Left ventricle myocardium inferior (tissue), 1 donor: ENCODE measurements at regions of chr14 and their contacts with region 1.

Region 1: GRCh38 chr14:91286530-91286937 is 42.0 kb upstream of the GPR68 start:
- DNase-seq: peak; percentile 71
- H3K4me3 ChIP-seq: no peak overlapping the region
- H3K27ac ChIP-seq: no peak overlapping the region
- H3K4me1 ChIP-seq: peaks cover 18% of the 10 kb centered on the region
- H3K27me3 ChIP-seq: no peaks in the 10 kb centered on the region
- CTCF ChIP-seq: peak; percentile 90

Region 2: GRCh38 chr14:90894241-90894640 is 392.3 kb before region 1 on chr14:
- intact Hi-C with region 1: loop called (anchors 10 kb)
- DNase-seq: no peak
- H3K4me3 ChIP-seq: no peak overlapping the region
- H3K27ac ChIP-seq: peak overlapping the region; percentile 2
- H3K4me1 ChIP-seq: peaks cover 15% of the 10 kb centered on the region
- H3K27me3 ChIP-seq: no peaks in the 10 kb centered on the region
- CTCF ChIP-seq: no peak

Region 3: DNA sequence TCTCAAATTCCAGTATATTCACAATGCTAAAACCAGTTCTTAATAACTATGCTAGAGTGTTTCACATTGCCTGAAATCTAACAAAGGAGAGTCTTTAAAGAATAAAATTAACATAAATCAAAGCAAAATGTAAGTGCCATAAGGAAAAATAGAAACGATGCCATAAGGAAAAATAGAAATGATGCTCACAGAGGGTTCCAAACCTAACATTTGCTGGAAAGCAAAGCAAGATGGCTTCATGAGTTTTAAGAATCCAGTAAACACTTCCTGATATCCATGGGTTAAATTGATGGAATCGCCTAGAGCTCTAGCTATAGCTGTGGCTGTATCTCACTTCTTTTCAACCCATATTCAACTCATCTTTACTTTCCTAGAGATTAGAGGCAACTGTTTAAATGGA is 105.9 kb before region 1 on chr14:
- intact Hi-C with region 1: loop called (anchors 5 kb)
- DNase-seq: no peak
- H3K4me3 ChIP-seq: no peak overlapping the region
- H3K27ac ChIP-seq: no peak overlapping the region
- H3K4me1 ChIP-seq: peaks cover 9% of the 10 kb centered on the region
- H3K27me3 ChIP-seq: no peaks in the 10 kb centered on the region
- CTCF ChIP-seq: no peak

Region 4: DNA sequence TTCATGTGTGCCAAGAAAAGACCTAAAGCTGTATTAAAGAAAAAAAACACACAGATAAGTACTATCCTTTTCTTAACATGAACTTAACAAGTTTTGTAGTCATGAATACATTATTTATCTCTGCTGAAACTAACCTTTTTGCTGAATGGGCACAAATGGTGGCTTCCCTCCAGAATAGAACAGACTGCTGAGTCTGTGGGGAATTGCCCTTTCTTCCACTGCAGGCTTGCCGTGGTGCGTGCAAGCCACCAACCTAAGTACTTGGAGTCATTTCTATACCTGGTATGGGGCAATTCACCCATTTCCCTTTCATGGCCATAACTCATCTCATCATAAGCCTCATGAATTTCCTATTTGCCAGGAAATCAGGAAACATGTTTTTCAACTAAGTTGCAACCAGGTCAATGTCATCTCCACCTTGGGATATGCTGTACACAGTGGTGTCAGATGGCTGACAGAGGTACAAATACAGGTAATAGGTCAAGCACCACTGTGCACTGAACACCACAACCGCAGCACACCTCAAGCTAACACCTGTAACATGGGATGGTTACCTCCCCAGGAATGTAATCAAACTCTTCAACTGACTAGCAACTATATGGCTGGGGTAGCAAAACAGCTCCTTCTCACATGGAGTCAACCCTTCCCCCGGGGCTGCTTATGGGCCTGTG is 395.5 kb after region 1 on chr14:
- intact Hi-C with region 1: no loop called
- DNase-seq: no peak
- H3K4me3 ChIP-seq: no peak overlapping the region
- H3K27ac ChIP-seq: no peak overlapping the region
- H3K4me1 ChIP-seq: no peaks in the 10 kb centered on the region
- H3K27me3 ChIP-seq: peaks cover 6% of the 10 kb centered on the region
- CTCF ChIP-seq: no peak